ENCODE measurements at regions of chr11 and their contacts with region 1.

Region 1: DNA sequence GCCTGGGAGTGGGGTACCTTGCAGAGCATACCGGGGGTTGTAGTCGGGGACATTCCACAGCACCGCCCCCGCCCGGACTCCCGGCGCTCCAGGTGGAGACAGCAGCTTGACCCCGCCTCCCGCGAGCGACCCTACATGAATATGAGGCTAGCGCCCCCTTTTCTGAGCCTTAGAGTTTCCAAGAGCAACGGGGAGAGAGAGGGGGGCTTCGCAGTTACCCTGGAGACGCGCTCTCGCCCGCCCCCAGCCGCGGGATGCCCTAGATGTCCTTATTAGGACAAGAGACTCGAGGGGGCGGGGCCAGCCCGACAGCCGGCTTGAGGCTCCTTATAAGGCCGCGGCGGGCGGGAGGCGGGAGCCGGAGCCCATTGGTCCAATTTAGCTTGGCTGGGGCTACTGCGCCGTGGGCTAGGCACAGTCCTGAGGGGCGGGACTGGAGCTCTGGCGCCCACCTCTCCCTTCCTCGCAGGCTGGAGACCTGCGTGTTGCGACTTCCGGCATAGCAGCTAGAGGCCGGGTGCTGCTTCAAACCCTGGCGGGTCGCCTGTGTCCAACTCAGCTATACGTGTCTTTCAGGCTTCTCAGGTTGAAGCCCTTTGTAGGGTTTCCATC is 927 bp upstream of the MUS81 start:
- DNase-seq: peak; percentile 87 to 99 (median 95)
- ATAC-seq: peak; percentile 53
- H3K4me3 ChIP-seq: peak overlapping the region; percentile 90
- H3K4me3 Mint-ChIP-seq: peak overlapping the region; percentile 91
- H3K27ac ChIP-seq: peak overlapping the region; percentile 92 to 96
- H3K27ac Mint-ChIP-seq: peak overlapping the region; percentile 94
- H3K4me1 ChIP-seq: peaks cover 78% of the 10 kb centered on the region
- H3K4me1 Mint-ChIP-seq: peaks cover 57% of the 10 kb centered on the region
- H3K27me3 ChIP-seq: no peaks in the 10 kb centered on the region
- H3K27me3 Mint-ChIP-seq: no peaks in the 10 kb centered on the region
- CTCF ChIP-seq: no peak

Region 2: GRCh38 chr11:65102142-65103095 is 756.9 kb before region 1 on chr11:
- CTCF ChIA-PET with region 1: no interaction called
- POLR2A ChIA-PET with region 1: no interaction called
- intact Hi-C with region 1: no loop called
- DNase-seq: no peak
- ATAC-seq: no peak
- H3K4me3 ChIP-seq: no peak overlapping the region
- H3K4me3 Mint-ChIP-seq: no peak overlapping the region
- H3K27ac ChIP-seq: no peak overlapping the region
- H3K27ac Mint-ChIP-seq: no peak overlapping the region
- H3K4me1 ChIP-seq: peaks cover 7% of the 10 kb centered on the region
- H3K4me1 Mint-ChIP-seq: peaks cover 15% of the 10 kb centered on the region
- H3K27me3 ChIP-seq: no peaks in the 10 kb centered on the region
- H3K27me3 Mint-ChIP-seq: no peaks in the 10 kb centered on the region
- CTCF ChIP-seq: no peak

Region 3: GRCh38 chr11:65711785-65712632 is 147.3 kb before region 1 on chr11 and contains the start of gene KAT5:
- CTCF ChIA-PET with region 1: interaction called, 8 read pairs
- POLR2A ChIA-PET with region 1: interaction called, 37 read pairs
- intact Hi-C with region 1: no loop called
- DNase-seq: peak; percentile 95 to 99 (median 96)
- ATAC-seq: peak; percentile 79
- H3K4me3 ChIP-seq: peak within 1 kb of the TSS; percentile 82
- H3K4me3 Mint-ChIP-seq: peak within 1 kb of the TSS; percentile 98
- H3K27ac ChIP-seq: peak within 1 kb of the TSS; percentile 99
- H3K27ac Mint-ChIP-seq: peak within 1 kb of the TSS; percentile 99
- H3K4me1 ChIP-seq: peaks cover 30% of the 10 kb centered on the region
- H3K4me1 Mint-ChIP-seq: peaks cover 23% of the 10 kb centered on the region
- H3K27me3 ChIP-seq: no peaks in the 10 kb centered on the region
- H3K27me3 Mint-ChIP-seq: no peaks in the 10 kb centered on the region
- CTCF ChIP-seq: peak; percentile 98
- total RNA-seq, gene KAT5: 90.9 to 99.6 TPM

Region 4: DNA sequence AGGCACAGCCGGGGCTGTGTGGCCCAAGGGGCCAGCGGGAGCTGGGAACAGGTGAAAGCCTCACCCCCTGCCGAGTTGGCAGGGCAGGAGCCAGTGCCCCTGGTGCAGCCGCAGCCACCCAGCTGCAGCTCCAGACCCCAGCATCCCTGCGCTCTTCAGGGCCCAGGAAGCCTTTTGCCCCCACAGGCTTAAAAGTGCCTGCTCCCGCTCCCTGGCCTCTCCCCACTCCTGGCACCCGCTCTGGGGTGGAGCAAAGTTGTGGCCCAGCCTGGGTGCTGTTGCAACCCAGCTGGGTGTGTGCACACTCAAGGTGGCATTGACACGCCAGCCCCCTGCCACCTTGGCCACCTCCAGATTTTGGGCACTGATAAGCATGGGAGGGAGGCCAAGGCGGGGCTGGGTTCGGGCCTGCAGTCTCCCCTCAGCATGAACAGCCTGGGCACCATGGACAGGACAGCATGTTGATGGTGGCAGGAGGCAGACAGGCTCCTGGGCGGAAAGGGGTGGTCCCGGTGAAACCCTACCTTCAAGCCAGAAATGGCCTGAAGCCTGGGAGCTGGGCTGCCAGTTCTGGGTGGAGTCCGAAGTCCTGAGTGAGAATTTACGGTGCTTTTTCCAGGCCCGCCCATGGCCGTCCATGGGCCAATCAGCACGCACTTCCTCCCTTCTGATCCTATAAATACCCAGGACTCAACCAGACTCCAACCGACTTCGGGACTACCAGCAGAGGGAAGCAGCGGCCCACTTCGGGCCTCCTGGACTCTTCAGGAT is 115.2 kb before region 1 on chr11:
- CTCF ChIA-PET with region 1: no interaction called
- POLR2A ChIA-PET with region 1: no interaction called
- intact Hi-C with region 1: no loop called
- DNase-seq: peak in 4 of 14 experiments; percentile 5 to 39 (median 8)
- ATAC-seq: no peak
- H3K4me3 ChIP-seq: no peak overlapping the region
- H3K4me3 Mint-ChIP-seq: no peak overlapping the region
- H3K27ac ChIP-seq: no peak overlapping the region
- H3K27ac Mint-ChIP-seq: no peak overlapping the region
- H3K4me1 ChIP-seq: no peaks in the 10 kb centered on the region
- H3K4me1 Mint-ChIP-seq: no peaks in the 10 kb centered on the region
- H3K27me3 ChIP-seq: peaks cover 0 to 4% of the 10 kb centered on the region in 2 experiments
- H3K27me3 Mint-ChIP-seq: peaks cover 29% of the 10 kb centered on the region
- CTCF ChIP-seq: no peak

Region 5: GRCh38 chr11:65873318-65874156 is 14.2 kb after region 1 on chr11:
- CTCF ChIA-PET with region 1: interaction called, 17 read pairs
- POLR2A ChIA-PET with region 1: interaction called, 137 read pairs
- intact Hi-C with region 1: loop called (anchors 1 kb)
- DNase-seq: peak; percentile 92 to 99 (median 96)
- ATAC-seq: peak; percentile 95
- H3K4me3 ChIP-seq: peak overlapping the region; percentile 60
- H3K4me3 Mint-ChIP-seq: peak overlapping the region; percentile 89
- H3K27ac ChIP-seq: peak overlapping the region; percentile 78 to 81
- H3K27ac Mint-ChIP-seq: peak overlapping the region; percentile 83
- H3K4me1 ChIP-seq: peaks cover 51% of the 10 kb centered on the region
- H3K4me1 Mint-ChIP-seq: peaks cover 16% of the 10 kb centered on the region
- H3K27me3 ChIP-seq: no peaks in the 10 kb centered on the region
- H3K27me3 Mint-ChIP-seq: no peaks in the 10 kb centered on the region
- CTCF ChIP-seq: no peak

Region 6: GRCh38 chr11:65894034-65894591 is 34.8 kb after region 1 on chr11:
- CTCF ChIA-PET with region 1: interaction called, 80 read pairs
- POLR2A ChIA-PET with region 1: interaction called, 248 read pairs
- intact Hi-C with region 1: loop called in 1 of 2 experiments (anchors 2 kb)
- DNase-seq: peak in 4 of 14 experiments; percentile 54 to 67 (median 64)
- ATAC-seq: no peak
- H3K4me3 ChIP-seq: peak overlapping the region; percentile 40
- H3K4me3 Mint-ChIP-seq: peak overlapping the region; percentile 88
- H3K27ac ChIP-seq: peak overlapping the region; percentile 60 to 77
- H3K27ac Mint-ChIP-seq: peak overlapping the region; percentile 88
- H3K4me1 ChIP-seq: peaks cover 61% of the 10 kb centered on the region
- H3K4me1 Mint-ChIP-seq: peaks cover 43% of the 10 kb centered on the region
- H3K27me3 ChIP-seq: peaks cover 3% of the 10 kb centered on the region in 2 experiments
- H3K27me3 Mint-ChIP-seq: no peaks in the 10 kb centered on the region
- CTCF ChIP-seq: no peak

Region 7: DNA sequence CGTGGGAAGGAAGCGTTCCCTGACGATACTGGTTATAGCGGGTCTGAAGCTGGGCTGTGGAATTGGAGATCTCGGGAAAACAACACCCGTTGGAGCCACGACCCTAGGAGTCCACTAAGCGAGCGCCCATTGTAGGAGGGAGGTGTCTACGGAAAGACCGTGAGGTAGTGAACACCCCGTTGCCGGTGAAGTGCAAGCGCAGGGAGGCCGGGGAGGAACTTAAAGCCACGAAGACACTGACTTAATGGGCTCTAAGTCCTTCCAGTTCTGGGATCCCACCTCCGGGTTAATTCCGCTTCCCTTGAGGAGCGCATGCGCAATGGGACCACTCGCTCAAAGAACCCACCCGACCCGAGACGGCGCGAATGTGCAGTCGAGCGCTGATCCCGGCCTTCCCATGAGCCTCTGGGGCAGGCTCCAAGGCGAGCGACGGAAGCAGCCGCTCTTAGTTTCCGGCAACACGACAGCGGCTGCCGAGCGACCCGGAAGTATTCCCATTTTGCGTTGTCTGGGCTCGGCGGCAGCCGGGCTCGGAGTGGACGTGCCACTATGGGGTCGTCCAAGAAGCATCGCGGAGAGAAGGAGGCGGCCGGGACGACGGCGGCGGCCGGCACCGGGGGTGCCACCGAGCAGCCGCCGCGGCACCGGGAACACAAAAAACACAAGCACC is 102.1 kb after region 1 on chr11 and contains the start of gene SART1:
- CTCF ChIA-PET with region 1: no interaction called
- POLR2A ChIA-PET with region 1: interaction called, 8 read pairs
- intact Hi-C with region 1: loop called in 1 of 2 experiments (anchors 1 kb)
- DNase-seq: peak; percentile 89 to 99 (median 94)
- ATAC-seq: peak; percentile 90
- H3K4me3 ChIP-seq: peak within 1 kb of the TSS; percentile 92
- H3K4me3 Mint-ChIP-seq: peak within 1 kb of the TSS; percentile 99
- H3K27ac ChIP-seq: peak within 1 kb of the TSS; percentile 93 to 95
- H3K27ac Mint-ChIP-seq: peak within 1 kb of the TSS; percentile 96
- H3K4me1 ChIP-seq: peaks cover 54% of the 10 kb centered on the region
- H3K4me1 Mint-ChIP-seq: peaks cover 55% of the 10 kb centered on the region
- H3K27me3 ChIP-seq: no peaks in the 10 kb centered on the region
- H3K27me3 Mint-ChIP-seq: no peaks in the 10 kb centered on the region
- CTCF ChIP-seq: no peak
- total RNA-seq, gene SART1: 78.6 to 80.2 TPM

Region 8: GRCh38 chr11:66081505-66081904 is 222.2 kb after region 1 on chr11:
- CTCF ChIA-PET with region 1: no interaction called
- POLR2A ChIA-PET with region 1: interaction called, 12 read pairs
- intact Hi-C with region 1: no loop called
- DNase-seq: peak; percentile 62 to 92 (median 79)
- ATAC-seq: peak; percentile 93
- H3K4me3 ChIP-seq: peak overlapping the region; percentile 35
- H3K4me3 Mint-ChIP-seq: peak overlapping the region; percentile 88
- H3K27ac ChIP-seq: peak overlapping the region; percentile 80 to 94
- H3K27ac Mint-ChIP-seq: peak overlapping the region; percentile 88
- H3K4me1 ChIP-seq: peaks cover 87% of the 10 kb centered on the region
- H3K4me1 Mint-ChIP-seq: peaks cover 91% of the 10 kb centered on the region
- H3K27me3 ChIP-seq: no peaks in the 10 kb centered on the region
- H3K27me3 Mint-ChIP-seq: no peaks in the 10 kb centered on the region
- CTCF ChIP-seq: no peak

Measured in CD4-positive, alpha-beta T cell (primary cell).